ENCODE measurements at regions of chr2 and their contacts with region 1.

Region 1: GRCh38 chr2:42169100-42169873 is at the start of gene EML4:
- DNase-seq: peak; percentile 91
- H3K4me3 ChIP-seq: peak within 1 kb of the TSS; percentile 82
- H3K27ac ChIP-seq: peak within 1 kb of the TSS; percentile 59
- H3K4me1 ChIP-seq: peaks cover 34% of the 10 kb centered on the region
- CTCF ChIP-seq: no peak
- total RNA-seq, gene EML4: 36.6 and 37.1 TPM in 2 replicates

Region 2: DNA sequence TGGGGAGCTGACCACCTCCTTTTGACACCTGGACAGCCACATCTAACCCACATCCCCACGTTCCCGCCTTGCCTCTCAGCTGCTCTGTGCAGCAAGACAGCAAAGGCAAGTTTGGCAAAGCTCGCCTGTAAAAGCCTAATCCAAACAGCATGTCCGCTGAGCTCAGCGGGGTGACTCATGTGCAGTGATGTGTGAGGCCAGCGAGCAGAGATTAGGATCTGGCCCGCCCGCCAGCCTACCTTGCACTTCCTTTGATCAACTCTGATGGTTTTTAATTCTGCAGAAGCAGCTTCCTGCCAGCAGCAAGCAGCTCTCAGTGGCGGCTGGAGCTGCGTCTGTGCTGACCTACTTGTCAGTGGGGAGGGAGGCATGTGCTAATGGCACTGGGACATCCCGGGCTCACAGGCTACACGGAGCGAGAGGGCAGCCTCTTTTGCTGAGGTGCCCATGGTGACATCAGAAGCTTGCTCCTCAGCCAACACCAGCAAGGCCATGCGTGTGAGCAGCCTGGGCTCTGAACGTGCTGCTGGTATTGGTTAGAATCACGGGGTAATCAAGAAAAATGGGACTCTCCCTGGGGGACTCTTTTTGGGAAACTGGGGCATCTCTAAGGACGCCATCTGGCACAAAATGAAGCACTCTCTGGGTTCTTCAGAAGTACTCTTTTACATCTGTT is 36.2 kb before region 1 on chr2:
- CTCF ChIA-PET with region 1: no interaction called
- POLR2A ChIA-PET with region 1: interaction called, 7 read pairs
- intact Hi-C with region 1: loop called (anchors 1 kb)
- DNase-seq: peak; percentile 92
- H3K4me3 ChIP-seq: peak overlapping the region; percentile 54
- H3K27ac ChIP-seq: peak overlapping the region; percentile 68
- H3K4me1 ChIP-seq: peaks cover 63% of the 10 kb centered on the region
- CTCF ChIP-seq: no peak

Region 3: GRCh38 chr2:42214669-42215068 is 45.4 kb after region 1 on chr2:
- CTCF ChIA-PET with region 1: no interaction called
- POLR2A ChIA-PET with region 1: no interaction called
- intact Hi-C with region 1: no loop called
- DNase-seq: no peak
- H3K4me3 ChIP-seq: no peak overlapping the region
- H3K27ac ChIP-seq: no peak overlapping the region
- H3K4me1 ChIP-seq: no peaks in the 10 kb centered on the region
- CTCF ChIP-seq: no peak